ENCODE measurements at regions of chr4 and their contacts with region 1.

Region 1: DNA sequence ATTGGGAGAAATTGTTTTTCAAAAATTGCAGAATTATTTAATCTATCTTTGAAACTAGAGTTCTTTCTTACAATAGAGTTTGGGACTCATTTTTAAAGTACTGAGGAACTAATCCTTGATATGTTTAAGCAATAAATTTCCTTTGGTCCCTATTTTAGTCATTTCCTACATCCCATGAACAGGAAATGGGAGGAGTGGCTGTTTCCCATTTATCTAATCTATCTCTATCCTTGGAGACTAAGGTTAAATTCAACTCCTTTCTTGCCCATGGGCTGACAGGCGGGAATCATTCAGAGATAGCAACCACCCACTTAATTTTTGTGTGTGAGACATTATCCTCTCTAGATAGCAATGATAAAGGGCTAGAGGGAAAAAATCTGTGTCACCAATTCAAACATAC is 131.6 kb upstream of the EMCN start:
- DNase-seq: peak in 5 of 42 donors; percentile 3 to 43 (median 11)

Region 2: DNA sequence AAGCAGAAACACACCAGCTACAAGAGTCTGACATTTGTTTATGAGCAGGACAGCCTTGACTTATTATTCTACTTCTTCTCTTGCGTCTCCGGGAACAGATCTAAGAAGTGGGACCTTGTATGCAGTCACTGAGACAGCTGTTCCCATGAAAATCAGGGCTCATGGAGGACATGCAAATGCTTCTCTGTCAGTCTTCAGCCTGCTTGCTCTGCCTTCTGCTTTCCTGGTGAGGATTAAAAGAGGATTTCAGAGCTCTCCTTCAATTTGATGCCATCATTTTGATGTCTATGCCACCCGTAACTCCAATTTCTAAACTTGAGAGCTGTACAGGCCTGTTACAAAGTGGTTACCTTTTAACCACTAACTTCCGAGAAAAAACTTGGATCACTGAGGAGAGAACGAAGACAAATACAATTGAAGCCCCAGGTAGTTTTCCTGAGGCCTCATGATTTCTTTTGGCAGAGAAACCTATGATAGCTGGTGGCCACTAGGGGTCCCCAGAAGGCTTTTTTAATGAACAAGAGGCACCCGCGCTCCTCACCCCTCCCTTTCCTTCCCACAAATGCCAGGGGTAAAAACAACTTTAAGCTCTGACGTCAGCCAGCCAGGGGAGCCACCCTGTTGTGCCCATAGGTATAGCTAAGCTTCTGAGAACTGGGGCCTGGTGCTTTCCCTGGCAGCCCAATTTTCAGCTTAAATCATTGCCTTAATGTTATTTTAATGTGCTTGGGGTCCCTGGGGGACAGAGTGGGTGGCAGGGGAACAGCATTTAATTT is 556.1 kb before region 1 on chr4:
- intact Hi-C with region 1: no loop called
- DNase-seq: peak; percentile 57 to 96 (median 82)

Region 3: GRCh38 chr4:100555611-100556337 is 93.6 kb before region 1 on chr4:
- intact Hi-C with region 1: no loop called
- DNase-seq: no peak

Region 4: DNA sequence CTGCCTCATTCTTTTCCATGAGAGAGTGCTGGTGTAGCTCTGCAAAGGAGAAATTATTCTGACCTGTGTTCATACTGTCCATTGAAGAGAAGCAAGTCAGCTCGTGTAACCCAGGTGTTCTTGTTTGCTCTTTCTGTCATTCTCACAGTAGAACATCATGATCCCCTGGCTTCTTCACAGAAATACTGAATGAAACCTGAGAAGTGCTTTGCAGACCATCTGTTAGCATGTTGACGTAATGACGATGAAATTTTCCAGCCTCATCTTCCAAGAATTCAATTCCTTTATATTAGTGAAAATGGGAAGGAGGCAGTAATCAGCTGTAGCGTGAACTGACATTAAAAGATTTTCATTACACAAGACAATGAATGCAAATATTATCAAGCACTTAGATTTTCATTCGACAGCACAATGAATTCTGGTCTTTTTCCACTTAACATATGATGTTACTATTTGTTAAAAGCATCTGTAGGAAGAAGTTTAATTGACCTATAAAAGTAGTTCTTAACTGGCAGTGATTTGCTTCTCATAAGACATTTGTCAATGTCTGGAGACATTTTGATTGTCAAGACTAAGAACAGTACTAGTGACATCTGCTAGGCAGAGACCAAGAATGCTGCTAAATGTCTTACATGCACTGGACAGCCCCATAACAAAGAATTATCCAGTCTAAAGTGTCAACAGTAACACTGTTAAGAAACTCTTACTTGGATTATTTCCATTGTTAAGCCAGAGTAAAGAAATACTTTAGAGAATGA is 1387.4 kb after region 1 on chr4:
- intact Hi-C with region 1: loop called (anchors 10 kb)
- DNase-seq: no peak